PC-9 (cell line): ENCODE measurements at regions of chr5 and their contacts with region 1.

Region 1: GRCh38 chr5:16812911-16813310 is 123.2 kb downstream of the MYO10 start:
- DNase-seq: peak; percentile 79 to 82
- H3K4me3 ChIP-seq: no peak overlapping the region
- H3K27ac ChIP-seq: no peak overlapping the region
- H3K4me1 ChIP-seq: peaks cover 43% of the 10 kb centered on the region
- H3K27me3 ChIP-seq: no peaks in the 10 kb centered on the region
- CTCF ChIP-seq: no peak; the same call in 1 of the 2 replicates

Region 2: GRCh38 chr5:16383544-16384052 is 429.3 kb before region 1 on chr5:
- CTCF ChIA-PET with region 1: no interaction called
- POLR2A ChIA-PET with region 1: no interaction called
- intact Hi-C with region 1: no loop called
- DNase-seq: no peak
- H3K4me3 ChIP-seq: no peak overlapping the region
- H3K27ac ChIP-seq: no peak overlapping the region
- H3K4me1 ChIP-seq: no peaks in the 10 kb centered on the region
- H3K27me3 ChIP-seq: peaks cover 10% of the 10 kb centered on the region
- CTCF ChIP-seq: no peak

Region 3: DNA sequence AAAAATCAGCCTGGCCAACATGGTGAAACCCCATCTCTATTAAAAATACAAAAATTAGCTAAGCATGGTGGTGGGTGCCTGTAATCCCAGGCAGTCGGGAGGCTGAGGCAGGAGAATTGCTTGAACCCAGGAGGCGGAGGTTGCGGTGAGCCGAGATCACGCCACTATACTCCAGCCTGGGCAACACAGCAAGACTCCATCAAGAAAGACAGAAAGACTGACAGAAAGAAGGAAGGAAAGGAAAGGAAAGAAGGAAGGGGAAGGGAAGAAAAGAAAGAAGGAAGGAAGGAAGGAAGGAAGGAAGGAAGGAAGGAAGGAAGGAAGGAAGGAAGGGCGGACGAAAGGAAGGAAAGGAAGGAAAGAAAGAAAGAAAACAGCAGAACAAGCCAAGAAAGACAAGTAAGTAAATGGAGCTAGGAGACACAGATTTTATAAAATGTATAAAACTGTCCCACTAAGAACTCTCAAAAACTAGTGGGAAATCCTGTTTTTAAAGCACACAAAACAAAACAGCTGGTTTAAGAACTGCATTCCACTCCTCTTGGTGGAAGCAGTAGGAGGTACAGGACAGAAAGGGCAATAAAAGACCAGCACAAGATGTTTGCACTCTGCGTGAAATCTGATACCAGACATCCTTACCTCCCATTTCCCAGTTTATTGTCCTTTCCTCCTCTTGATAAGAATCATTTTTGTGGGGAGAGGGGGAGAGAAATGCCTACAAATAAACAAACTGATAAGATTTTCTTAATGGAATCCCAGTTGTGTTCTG is 76.5 kb after region 1 on chr5:
- CTCF ChIA-PET with region 1: no interaction called
- POLR2A ChIA-PET with region 1: no interaction called
- intact Hi-C with region 1: loop called (anchors 1 kb)
- DNase-seq: peak; percentile 54 to 90
- H3K4me3 ChIP-seq: peak overlapping the region; percentile 35; the same call in 1 of the 2 replicates
- H3K27ac ChIP-seq: peak overlapping the region; percentile 72
- H3K4me1 ChIP-seq: peaks cover 66% of the 10 kb centered on the region
- H3K27me3 ChIP-seq: no peaks in the 10 kb centered on the region
- CTCF ChIP-seq: no peak

Region 4: DNA sequence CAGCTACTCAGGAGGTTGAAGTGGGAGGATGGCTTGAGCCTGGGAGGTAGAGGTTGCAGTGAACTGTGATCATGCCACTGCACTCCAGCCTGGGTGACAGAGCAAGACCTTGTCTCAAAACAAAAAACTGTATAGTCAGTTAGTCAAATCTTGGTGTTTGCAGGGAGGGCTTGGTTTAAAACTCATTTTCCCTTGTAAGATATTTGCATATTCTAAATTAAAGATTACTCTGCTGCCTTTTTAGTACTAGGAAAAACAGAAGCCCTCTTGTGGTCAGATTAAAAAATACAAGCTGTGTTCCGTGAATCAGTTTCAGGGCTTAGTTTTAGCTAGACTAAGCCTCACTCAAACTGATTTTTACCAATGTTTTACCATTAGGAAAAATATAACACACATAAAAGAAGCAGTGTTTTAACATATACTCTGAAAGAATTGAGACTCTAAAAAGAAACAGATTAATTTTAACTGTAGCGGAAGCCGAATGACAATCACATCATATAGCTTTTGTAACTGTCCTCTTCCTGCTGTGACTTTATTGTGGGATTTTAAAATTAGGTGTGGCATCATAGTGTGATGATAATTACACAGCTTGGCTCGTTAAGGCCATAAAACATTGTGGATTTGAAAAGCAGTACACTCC is 319.7 kb after region 1 on chr5:
- CTCF ChIA-PET with region 1: interaction called, 13 read pairs
- POLR2A ChIA-PET with region 1: no interaction called
- intact Hi-C with region 1: no loop called
- DNase-seq: no peak
- H3K4me3 ChIP-seq: no peak overlapping the region
- H3K27ac ChIP-seq: no peak overlapping the region
- H3K4me1 ChIP-seq: peaks cover 10% of the 10 kb centered on the region
- H3K27me3 ChIP-seq: no peaks in the 10 kb centered on the region
- CTCF ChIP-seq: peak; percentile 92

Region 5: GRCh38 chr5:17157916-17158529 is 345.1 kb after region 1 on chr5:
- CTCF ChIA-PET with region 1: interaction called, 12 read pairs
- POLR2A ChIA-PET with region 1: no interaction called
- intact Hi-C with region 1: no loop called
- DNase-seq: no peak
- H3K4me3 ChIP-seq: no peak overlapping the region
- H3K27ac ChIP-seq: no peak overlapping the region
- H3K4me1 ChIP-seq: peaks cover 9% of the 10 kb centered on the region
- H3K27me3 ChIP-seq: no peaks in the 10 kb centered on the region
- CTCF ChIP-seq: no peak

Region 6: DNA sequence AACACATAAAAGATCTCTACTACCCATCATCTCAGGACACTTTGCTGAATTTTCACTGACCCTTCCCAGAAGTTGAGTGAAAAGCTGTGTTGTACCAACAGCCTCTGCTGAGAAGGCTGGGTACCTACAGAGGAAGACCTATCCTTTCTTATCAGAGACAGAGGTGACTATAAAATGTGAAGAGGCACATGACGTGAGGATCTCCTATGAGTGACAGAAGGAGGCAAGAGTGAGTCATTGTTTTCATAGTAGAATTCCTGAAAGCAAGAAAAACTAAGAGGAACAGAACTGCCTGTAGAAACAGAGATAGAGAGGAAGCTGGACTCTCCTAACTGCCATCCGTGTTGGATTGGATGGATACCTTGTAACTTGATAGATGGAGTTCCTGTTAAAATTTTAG is 1443.7 kb after region 1 on chr5:
- CTCF ChIA-PET with region 1: interaction called, 13 read pairs
- POLR2A ChIA-PET with region 1: no interaction called
- intact Hi-C with region 1: no loop called
- DNase-seq: no peak
- H3K4me3 ChIP-seq: no peak overlapping the region
- H3K27ac ChIP-seq: no peak overlapping the region
- H3K4me1 ChIP-seq: no peaks in the 10 kb centered on the region
- H3K27me3 ChIP-seq: no peaks in the 10 kb centered on the region
- CTCF ChIP-seq: no peak